ENCODE measurements at regions of chr20 and their contacts with region 1.

Region 1: GRCh38 chr20:21921251-21921650 is 215.8 kb downstream of the PAX1 start:
- DNase-seq: no peak
- H3K4me3 ChIP-seq: no peak overlapping the region
- H3K27ac ChIP-seq: no peak overlapping the region
- H3K4me1 ChIP-seq: no peaks in the 10 kb centered on the region
- H3K27me3 ChIP-seq: no peaks in the 10 kb centered on the region
- CTCF ChIP-seq: no peak

Region 2: GRCh38 chr20:21840991-21841390 is 80.3 kb before region 1 on chr20:
- CTCF ChIA-PET with region 1: no interaction called
- dilution Hi-C with region 1: loop called (anchors 5 kb)
- in situ Hi-C with region 1: no loop called
- intact Hi-C with region 1: no loop called
- DNase-seq: no peak
- H3K4me3 ChIP-seq: no peak overlapping the region
- H3K27ac ChIP-seq: no peak overlapping the region
- H3K4me1 ChIP-seq: no peaks in the 10 kb centered on the region
- H3K27me3 ChIP-seq: no peaks in the 10 kb centered on the region
- CTCF ChIP-seq: no peak

Region 3: GRCh38 chr20:21936720-21937380 is 15.6 kb after region 1 on chr20:
- CTCF ChIA-PET with region 1: no interaction called
- dilution Hi-C with region 1: no loop called
- in situ Hi-C with region 1: no loop called
- intact Hi-C with region 1: no loop called
- DNase-seq: no peak
- H3K4me3 ChIP-seq: no peak overlapping the region
- H3K27ac ChIP-seq: no peak overlapping the region
- H3K4me1 ChIP-seq: no peaks in the 10 kb centered on the region
- H3K27me3 ChIP-seq: no peaks in the 10 kb centered on the region
- CTCF ChIP-seq: no peak

Region 4: DNA sequence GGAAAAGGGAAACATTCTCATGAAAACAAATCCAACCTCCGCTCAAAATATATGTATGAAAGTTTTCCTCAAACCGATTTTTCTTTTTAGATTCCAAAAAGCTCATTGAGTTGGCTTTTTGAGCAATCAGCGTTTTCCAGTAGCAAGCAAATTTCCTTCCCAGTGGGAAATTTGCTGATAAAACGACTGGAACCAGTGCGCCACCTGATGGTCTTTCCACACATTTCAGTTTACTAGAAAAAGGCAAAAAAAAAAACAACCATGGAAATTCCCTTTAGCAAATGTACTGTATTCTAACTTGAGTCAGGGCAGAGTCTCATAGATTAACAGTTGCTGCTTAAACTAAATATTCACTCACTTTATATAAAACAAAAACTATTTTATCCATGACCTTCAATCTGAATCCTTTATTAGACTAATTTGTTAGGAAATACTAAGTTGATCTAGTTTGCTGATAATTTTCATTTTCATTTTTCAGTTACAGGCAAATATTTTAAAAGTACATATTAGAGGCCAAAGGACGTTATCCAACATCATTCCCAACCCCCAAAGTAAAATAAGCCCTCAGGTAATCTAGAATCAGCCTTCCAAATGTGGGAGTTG is 391.6 kb after region 1 on chr20:
- CTCF ChIA-PET with region 1: no interaction called
- dilution Hi-C with region 1: no loop called
- in situ Hi-C with region 1: no loop called
- intact Hi-C with region 1: no loop called
- DNase-seq: peak; percentile 51
- H3K4me3 ChIP-seq: no peak overlapping the region
- H3K27ac ChIP-seq: no peak overlapping the region
- H3K4me1 ChIP-seq: no peaks in the 10 kb centered on the region
- H3K27me3 ChIP-seq: peaks cover 3% of the 10 kb centered on the region
- CTCF ChIP-seq: peak; percentile 66 to 72

Measured in mammary epithelial cell (primary cell).